Activated CD8-positive, alpha-beta T cell treated with anti-CD3 and anti-CD28 coated beads, Interleukin-2, amount 10 ng/mL, durations not matched to agents 7 days and 5 days (primary cell): ENCODE measurements at regions of chr13 and their contacts with region 1.

Region 1: GRCh38 chr13:49098771-49099512 is 121.2 kb upstream of the MLNR start:
- DNase-seq: no peak
- ATAC-seq: no peak
- H3K4me3 Mint-ChIP-seq: no peak overlapping the region
- H3K27ac Mint-ChIP-seq: no peak overlapping the region
- H3K4me1 Mint-ChIP-seq: peaks cover 2% of the 10 kb centered on the region
- H3K27me3 Mint-ChIP-seq: no peaks in the 10 kb centered on the region

Region 2: GRCh38 chr13:49110122-49110912 is 11.4 kb after region 1 on chr13:
- CTCF ChIA-PET with region 1: interaction called, 15 read pairs
- POLR2A ChIA-PET with region 1: no interaction called
- DNase-seq: peak; percentile 85
- ATAC-seq: peak; percentile 83
- H3K4me3 Mint-ChIP-seq: peak overlapping the region; percentile 89
- H3K27ac Mint-ChIP-seq: peak overlapping the region; percentile 92
- H3K4me1 Mint-ChIP-seq: peaks cover 25% of the 10 kb centered on the region
- H3K27me3 Mint-ChIP-seq: no peaks in the 10 kb centered on the region

Region 3: GRCh38 chr13:49190901-49191300 is 92.0 kb after region 1 on chr13:
- CTCF ChIA-PET with region 1: no interaction called
- POLR2A ChIA-PET with region 1: no interaction called
- DNase-seq: no peak
- ATAC-seq: no peak
- H3K4me3 Mint-ChIP-seq: no peak overlapping the region
- H3K27ac Mint-ChIP-seq: no peak overlapping the region
- H3K4me1 Mint-ChIP-seq: peaks cover 13% of the 10 kb centered on the region
- H3K27me3 Mint-ChIP-seq: no peaks in the 10 kb centered on the region